Posterior vena cava (tissue), 2 donors: ENCODE measurements at regions of chr21 and their contacts with region 1.

Region 1: GRCh38 chr21:26945916-26946675 is 20.8 kb downstream of the ADAMTS5 start:
- DNase-seq: peak; percentile 71

Region 2: DNA sequence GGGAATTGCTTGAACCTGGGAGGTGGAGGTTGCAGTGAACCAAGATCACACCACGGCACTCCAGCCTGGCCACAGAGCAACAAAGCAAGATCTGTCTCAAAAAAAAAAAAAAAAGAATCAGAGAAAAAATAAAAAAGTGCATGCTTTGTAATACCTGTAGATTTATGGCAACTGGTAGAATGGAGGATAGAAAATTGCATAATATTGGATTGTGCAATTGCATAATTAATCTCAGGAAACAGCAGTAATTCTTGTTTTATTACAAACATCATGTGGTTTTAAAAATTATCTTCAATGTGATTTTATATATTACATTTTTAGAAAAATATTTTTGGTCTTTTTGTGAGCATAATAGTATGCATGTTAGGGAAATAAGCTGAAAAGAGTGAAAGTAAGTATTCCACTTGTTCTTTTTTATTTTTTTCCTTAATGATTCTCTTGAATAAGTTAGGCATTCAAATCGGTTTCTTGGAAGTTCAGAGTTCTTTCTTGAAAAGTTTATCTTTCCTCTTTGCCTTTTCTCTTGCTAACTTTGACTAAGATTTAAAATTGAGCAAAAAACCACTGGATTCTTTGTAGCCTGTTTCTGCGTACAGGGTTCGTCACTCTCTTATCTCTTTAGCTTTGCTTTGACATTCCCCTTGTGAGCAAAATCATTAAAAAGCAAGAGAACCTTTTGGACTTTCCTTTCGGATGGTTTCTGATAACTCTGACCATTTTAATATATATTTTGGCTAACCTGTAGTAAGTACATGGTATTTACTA is 148.3 kb after region 1 on chr21:
- intact Hi-C with region 1: loop called in 1 of 2 experiments (anchors 5 kb)
- DNase-seq: no peak